ENCODE measurements at regions of chr12 and their contacts with region 1.

Region 1: GRCh38 chr12:124767066-124767821 is 96.4 kb downstream of the SCARB1 start:
- DNase-seq: peak in 1 of 2 donors; percentile 89
- H3K4me3 ChIP-seq: no peak overlapping the region
- H3K27ac ChIP-seq: peak overlapping the region in 1 of 2 donors; percentile 79
- H3K4me1 ChIP-seq: peaks cover 24 to 37% of the 10 kb centered on the region in 2 donors
- H3K27me3 ChIP-seq: no peaks in the 10 kb centered on the region
- CTCF ChIP-seq: peak; percentile 97 to 100 (median 99)

Region 2: DNA sequence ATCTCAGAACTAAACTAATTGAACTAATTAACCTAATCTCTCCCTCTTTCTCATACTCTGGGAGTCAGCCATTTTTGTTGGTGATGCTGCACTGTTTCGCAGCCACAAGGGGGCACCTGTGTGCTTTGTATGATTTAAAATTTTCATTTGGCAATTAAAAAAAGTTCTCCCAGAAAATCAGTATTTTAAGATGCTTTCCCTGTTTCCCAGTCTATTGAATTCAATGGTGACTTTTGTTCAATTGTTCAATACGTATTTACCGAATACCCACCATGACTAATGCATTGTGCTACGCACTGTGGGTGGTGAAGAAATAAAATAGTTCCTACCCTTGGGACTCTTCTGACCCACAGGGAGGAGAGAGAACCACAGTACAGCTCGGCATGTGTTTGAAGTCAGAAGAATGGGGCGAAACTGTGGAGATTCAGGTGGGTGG is 730.6 kb before region 1 on chr12:
- intact Hi-C with region 1: loop called (anchors 1 kb)
- DNase-seq: no peak
- H3K4me3 ChIP-seq: no peak overlapping the region
- H3K27ac ChIP-seq: no peak overlapping the region
- H3K4me1 ChIP-seq: no peaks in the 10 kb centered on the region
- H3K27me3 ChIP-seq: no peaks in the 10 kb centered on the region
- CTCF ChIP-seq: peak; percentile 85 to 88 (median 85)

Region 3: GRCh38 chr12:124053851-124054250 is 713.4 kb before region 1 on chr12:
- intact Hi-C with region 1: loop called (anchors 5 kb)
- DNase-seq: no peak
- H3K4me3 ChIP-seq: no peak overlapping the region
- H3K27ac ChIP-seq: no peak overlapping the region
- H3K4me1 ChIP-seq: no peaks in the 10 kb centered on the region
- H3K27me3 ChIP-seq: no peaks in the 10 kb centered on the region
- CTCF ChIP-seq: peak; percentile 56 to 73 (median 72)

Region 4: GRCh38 chr12:124321040-124321481 is 446.2 kb before region 1 on chr12:
- intact Hi-C with region 1: loop called (anchors 2 kb)
- DNase-seq: peak in 1 of 2 donors; percentile 82
- H3K4me3 ChIP-seq: no peak overlapping the region
- H3K27ac ChIP-seq: peak overlapping the region in 1 of 2 donors; percentile 5
- H3K4me1 ChIP-seq: peaks cover 3 to 8% of the 10 kb centered on the region in 2 donors
- H3K27me3 ChIP-seq: no peaks in the 10 kb centered on the region
- CTCF ChIP-seq: peak; percentile 90 to 97 (median 96)

Region 5: DNA sequence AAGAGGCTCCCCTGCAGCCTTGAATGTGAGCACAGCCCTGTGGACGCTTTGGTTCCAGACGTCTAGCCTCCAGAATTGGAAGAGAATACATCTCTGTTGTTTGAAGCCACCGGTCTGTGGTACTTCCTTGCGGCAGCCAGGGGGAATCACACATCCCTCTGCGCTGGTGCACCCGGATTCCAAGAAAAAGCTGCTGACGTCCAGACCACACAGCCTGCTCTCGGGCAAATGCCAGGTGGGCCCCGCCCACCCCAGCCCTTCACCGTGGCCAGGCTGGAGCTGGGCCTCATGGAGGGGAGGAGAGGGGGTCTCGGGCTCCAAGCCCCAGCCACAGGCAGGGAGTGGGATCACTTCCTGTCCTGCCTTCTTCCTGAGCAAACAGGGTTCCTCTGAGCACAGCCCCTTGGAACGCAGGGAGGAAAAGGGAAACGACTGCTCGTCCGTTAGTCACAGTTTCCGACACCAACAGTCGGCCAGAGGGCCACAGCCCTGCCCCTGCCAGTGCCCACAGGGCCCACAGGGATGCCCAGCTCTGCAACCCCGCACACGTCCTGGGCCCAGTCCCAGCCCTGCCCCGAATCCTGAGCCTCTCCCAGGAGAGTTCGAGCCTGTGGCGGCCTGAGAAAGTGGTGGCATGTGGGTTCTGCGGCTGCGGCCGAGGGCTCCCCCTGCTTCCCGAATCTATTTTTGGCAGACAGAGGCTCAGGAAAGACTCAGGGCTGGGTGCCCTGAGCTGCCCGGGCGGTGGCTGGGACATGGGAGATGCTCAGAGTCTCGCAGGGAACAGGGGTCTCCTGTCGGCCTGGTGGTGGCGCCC is 387.1 kb before region 1 on chr12:
- intact Hi-C with region 1: loop called (anchors 5 kb)
- DNase-seq: peak; percentile 73 to 96
- H3K4me3 ChIP-seq: peak overlapping the region in 1 of 2 donors; percentile 11
- H3K27ac ChIP-seq: peak overlapping the region; percentile 89 to 90
- H3K4me1 ChIP-seq: peaks cover 15 to 38% of the 10 kb centered on the region in 2 donors
- H3K27me3 ChIP-seq: no peaks in the 10 kb centered on the region
- CTCF ChIP-seq: peak; percentile 59 to 79 (median 67)

Region 6: DNA sequence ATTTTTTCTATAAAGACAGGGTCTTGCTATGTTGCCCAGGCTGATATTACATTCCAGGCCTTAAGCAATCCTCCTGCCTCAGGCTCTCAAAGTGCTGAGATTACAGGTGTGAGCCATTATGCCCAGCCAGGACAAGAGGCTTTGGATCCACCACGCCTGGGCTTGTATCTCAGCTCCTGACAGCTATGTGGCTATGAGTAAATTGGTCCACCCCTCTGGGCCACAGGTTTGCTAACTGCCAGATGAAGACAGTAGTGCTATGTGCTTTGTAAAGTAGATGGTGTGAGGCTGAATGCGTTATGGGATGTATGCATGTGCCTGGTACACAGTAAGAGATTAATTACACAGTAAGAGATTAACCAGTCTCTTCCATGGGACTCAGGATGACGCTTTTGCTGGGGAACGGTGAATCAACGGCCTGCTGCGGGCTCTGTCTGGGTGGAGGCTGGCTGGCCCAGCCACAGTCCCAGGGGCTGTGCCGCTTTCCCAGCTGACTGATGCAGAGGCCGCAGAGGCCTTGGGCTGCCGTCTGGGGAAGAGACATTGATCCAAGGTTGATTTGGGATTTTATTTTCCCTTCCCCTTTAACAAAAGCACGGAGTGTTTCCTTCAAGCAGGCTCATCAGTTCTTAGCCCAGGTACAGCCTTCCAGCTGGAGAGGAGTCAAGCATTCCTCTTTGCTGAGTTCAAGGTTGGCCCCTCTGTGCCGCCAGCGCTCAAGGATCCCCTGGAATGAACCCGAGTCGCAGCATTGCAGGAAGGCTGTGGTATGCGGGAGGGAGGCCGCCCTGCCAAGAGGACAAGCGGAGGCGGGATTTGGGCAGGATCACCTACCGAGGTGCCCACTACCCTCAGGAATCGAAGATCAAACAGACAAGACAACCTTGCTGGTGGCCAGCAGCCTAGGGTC is 146.2 kb before region 1 on chr12:
- intact Hi-C with region 1: loop called (anchors 2 kb)
- DNase-seq: peak; percentile 41 to 93
- H3K4me3 ChIP-seq: no peak overlapping the region
- H3K27ac ChIP-seq: peak overlapping the region; percentile 50 to 62
- H3K4me1 ChIP-seq: peaks cover 6 to 23% of the 10 kb centered on the region in 2 donors
- H3K27me3 ChIP-seq: no peaks in the 10 kb centered on the region
- CTCF ChIP-seq: no peak

Region 7: DNA sequence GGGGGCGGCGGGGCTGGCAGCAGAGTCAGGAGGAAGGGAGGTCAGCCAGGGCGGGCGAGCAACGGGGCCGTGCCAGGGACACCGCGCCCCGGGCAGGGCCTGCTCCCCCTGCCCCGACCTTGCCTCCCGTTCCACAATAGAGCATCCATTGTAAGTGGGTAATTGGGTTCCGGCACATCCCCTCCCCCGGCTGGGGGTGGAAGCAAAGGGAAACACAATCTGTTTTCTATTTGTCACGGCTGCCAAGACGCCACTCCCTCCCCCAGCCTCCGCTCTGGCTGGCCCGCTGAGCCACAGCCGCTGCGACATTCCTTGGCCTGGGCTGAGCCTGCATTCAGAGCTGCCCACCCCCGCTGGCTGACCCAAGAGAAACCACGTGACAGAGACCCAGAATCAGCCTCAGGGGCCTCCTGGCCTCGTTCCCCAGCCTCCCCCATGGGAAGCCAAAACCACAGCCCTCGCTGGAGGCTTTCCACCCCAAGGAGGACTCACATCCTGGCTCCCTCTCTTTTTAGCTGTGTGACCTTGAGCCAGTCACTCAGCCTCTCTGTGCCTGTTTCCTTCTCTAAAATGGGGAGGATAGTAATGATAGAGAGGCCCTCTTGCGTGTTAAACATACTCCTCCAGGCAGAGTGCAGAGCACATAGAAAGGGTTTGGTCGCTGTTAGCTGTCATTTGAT is 21.2 kb before region 1 on chr12:
- intact Hi-C with region 1: loop called (anchors 2 kb)
- DNase-seq: peak; percentile 77 to 98
- H3K4me3 ChIP-seq: peak overlapping the region in 1 of 2 donors; percentile 2
- H3K27ac ChIP-seq: peak overlapping the region; percentile 83 to 89
- H3K4me1 ChIP-seq: peaks cover 8 to 12% of the 10 kb centered on the region in 2 donors
- H3K27me3 ChIP-seq: no peaks in the 10 kb centered on the region
- CTCF ChIP-seq: no peak